Motor neuron (in vitro differentiated cells): ENCODE measurements at regions of chr13 and their contacts with region 1.

Region 1: DNA sequence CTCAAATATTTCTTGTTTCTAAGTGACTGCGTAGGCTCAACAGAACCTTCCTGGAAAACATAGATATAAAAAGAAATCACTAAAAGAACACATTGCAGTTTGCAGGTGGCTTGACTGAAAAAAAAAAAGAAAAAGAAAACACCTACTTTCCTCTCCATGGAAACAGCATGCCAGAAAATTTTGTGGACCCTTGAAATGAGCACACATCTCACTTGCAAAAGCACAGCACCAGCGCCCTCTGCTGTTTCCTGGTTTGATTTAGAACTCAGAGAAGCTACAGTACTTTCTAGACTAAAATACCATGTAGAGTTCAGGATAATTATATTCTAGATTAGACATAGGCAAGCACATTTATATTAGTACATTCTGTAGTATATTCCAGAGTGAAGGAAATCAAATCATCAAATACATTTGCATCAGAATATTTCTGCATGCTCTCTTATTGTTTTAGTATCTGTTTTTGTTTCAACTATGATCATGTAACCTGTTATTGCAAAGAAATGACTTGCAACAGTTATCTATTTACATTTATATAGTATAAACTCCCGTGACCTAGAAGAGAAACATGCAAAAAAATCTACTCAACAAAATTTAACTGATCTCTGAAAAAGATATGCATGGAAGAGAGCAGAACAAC is 22.3 kb upstream of the XPO4 start:
- ATAC-seq: peak; percentile 44 to 91 (median 66)
- H3K4me3 ChIP-seq: no peak overlapping the region
- H3K27ac ChIP-seq: no peak overlapping the region
- H3K4me1 ChIP-seq: no peaks in the 10 kb centered on the region

Region 2: GRCh38 chr13:20495082-20496023 is 429.5 kb before region 1 on chr13:
- in situ Hi-C with region 1: loop called in 7 of 9 experiments (anchors 10 to 25 kb)
- ATAC-seq: peak in 7 of 8 experiments; percentile 43 to 86 (median 70)
- H3K4me3 ChIP-seq: no peak overlapping the region
- H3K27ac ChIP-seq: no peak overlapping the region
- H3K4me1 ChIP-seq: no peaks in the 10 kb centered on the region

Region 3: DNA sequence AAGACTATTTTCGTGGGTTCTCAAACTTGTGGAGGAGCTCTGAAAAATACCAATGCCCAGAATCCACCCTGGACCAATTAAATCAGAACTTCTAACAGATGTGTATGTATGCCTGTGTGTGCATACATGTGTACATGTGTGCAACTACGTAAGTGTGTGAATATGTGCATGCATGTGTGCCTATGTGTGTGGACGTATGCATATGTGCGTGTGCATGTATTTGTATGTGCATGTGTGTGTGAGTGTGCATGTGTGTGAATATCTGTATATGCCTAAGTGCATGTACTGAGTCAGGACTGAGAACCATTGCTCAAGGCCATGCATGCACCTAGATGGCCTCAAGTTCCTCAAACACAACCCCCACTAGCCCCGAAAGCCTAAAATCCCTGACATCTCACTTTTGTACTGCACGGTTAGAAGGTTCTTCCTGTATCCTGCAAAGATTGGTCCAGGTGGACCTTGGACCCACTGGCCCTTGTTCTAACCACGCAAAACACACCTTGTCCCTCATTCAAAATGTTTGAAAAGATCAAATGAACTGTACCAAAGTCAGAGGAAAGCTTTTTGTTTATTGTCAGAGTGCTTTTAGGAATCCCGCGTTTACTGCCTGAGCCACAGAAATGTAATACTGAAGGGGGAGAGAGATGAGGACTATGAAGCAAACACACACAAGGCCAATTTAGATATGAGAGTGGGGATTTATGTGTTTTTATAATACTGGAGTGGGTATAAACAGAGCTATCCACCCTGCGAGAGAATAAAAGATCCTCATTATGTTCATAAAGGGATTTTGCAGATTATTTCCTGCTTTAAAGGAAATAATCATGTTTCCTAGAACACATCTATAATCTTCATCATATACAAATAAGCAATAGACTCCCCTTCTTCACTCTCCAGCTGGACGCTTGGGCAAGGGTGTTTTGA is 97.4 kb after region 1 on chr13:
- in situ Hi-C with region 1: no loop called
- ATAC-seq: peak in 2 of 8 experiments; percentile 27 to 31
- H3K4me3 ChIP-seq: no peak overlapping the region
- H3K27ac ChIP-seq: no peak overlapping the region
- H3K4me1 ChIP-seq: no peaks in the 10 kb centered on the region